ENCODE measurements at regions of chr19 and their contacts with region 1.

Region 1: DNA sequence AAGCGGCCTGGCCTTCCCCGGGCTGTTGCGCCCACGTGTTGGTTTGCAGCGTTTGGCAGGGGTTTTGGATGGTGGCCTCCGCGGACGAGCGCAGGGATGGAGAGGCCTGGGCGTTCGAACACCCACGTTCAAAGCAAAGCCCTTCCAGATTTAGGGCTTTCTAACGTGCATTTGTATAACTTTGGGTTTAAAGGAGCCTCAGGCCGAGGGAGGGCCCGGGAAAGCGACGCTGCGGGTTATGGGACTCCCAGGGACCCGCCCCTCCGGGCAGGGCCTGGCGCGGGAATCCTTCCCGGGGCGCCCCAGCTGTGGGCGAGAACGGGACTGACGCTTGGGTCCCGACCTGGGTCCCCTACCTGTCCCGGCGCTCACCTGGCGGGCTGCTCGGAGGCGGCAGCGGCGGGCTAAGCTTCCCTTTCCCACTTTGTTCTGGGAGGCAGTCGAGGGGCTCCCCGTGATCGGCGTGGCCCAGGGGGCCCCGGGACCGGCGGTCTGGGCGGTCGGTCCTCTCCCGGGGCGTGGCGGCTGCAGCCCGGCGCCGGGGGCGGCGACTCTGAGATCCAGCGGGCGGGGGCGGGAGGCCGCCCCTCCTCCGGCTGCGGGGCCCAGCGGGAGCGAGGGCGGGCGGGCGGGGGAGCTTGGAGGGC is at the start of gene FBXO17:
- DNase-seq: peak; percentile 68
- H3K4me3 ChIP-seq: peak within 1 kb of the TSS; percentile 65 to 91 (median 77)
- H3K27ac ChIP-seq: peak within 1 kb of the TSS; percentile 60
- H3K4me1 ChIP-seq: peaks cover 14% of the 10 kb centered on the region
- H3K27me3 ChIP-seq: no peaks in the 10 kb centered on the region
- CTCF ChIP-seq: no peak
- total RNA-seq, gene FBXO17: 18.6 to 25.8 TPM

Region 2: DNA sequence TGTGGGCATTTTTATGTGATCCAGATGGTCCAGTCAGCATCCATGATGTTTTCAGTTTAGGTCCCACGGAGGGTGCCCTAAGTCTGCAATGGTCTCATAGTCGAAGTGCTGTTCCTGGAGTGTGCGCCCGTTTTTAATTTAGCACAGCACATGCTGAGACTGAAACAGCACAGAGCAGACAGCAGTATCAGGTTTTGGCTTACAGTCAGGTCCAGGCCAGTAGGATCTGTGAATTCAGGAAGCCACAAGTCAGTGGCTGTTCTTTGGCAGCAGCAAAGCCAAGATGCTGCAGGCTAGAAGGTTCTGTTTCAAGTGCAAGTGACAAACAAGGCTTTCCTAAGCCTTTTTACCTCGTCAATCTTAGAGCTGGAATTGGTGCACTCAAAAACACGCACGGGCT is 38.7 kb after region 1 on chr19:
- CTCF ChIA-PET with region 1: no interaction called
- dilution Hi-C with region 1: no loop called
- in situ Hi-C with region 1: no loop called
- intact Hi-C with region 1: no loop called
- DNase-seq: no peak
- H3K4me3 ChIP-seq: no peak overlapping the region
- H3K27ac ChIP-seq: no peak overlapping the region
- H3K4me1 ChIP-seq: no peaks in the 10 kb centered on the region
- H3K27me3 ChIP-seq: no peaks in the 10 kb centered on the region
- CTCF ChIP-seq: no peak

Region 3: DNA sequence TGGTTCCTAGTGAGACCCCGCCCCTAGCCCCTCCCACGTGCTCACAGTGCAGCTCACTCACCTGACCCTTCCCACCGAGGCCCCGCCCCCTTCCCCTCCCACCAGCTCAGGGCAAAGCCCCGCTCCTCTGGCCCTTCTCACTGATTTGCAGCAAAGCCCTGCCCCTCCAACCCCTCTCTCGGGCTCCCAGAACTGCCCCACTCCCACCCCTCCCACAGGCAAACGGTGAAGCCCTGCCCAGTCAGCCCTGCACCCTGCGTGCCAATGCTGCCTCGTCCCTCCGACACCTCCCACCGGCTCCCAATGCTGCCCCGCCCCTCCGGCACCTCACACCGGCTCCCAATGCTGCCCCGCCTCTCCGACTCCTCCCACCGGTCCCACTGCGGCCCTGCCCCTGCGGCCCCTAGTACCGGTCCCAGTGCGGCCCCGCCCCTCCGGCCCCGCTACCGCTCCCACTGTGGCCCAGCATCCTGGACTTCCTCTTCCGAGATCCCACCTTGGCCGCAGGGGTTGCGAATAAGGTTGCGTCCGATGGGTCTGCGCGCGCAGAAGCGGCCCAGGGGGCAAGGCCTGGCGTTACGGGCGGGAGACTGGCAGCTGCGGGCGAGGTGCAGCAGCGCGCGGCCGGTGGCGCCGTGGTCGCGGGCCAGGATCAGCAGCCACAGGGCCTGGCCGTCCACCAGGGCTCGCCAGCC is 56.2 kb after region 1 on chr19:
- CTCF ChIA-PET with region 1: no interaction called
- dilution Hi-C with region 1: no loop called
- in situ Hi-C with region 1: loop called in 1 of 2 experiments (anchors 10 kb)
- intact Hi-C with region 1: loop called (anchors 1 kb)
- DNase-seq: peak; percentile 96
- H3K4me3 ChIP-seq: peak overlapping the region; percentile 77 to 90 (median 79)
- H3K27ac ChIP-seq: peak overlapping the region; percentile 36
- H3K4me1 ChIP-seq: peaks cover 23% of the 10 kb centered on the region
- H3K27me3 ChIP-seq: no peaks in the 10 kb centered on the region
- CTCF ChIP-seq: no peak

Region 4: GRCh38 chr19:39078436-39079200 is 103.3 kb after region 1 on chr19:
- CTCF ChIA-PET with region 1: interaction called, 28 read pairs
- dilution Hi-C with region 1: no loop called
- in situ Hi-C with region 1: no loop called
- intact Hi-C with region 1: no loop called
- DNase-seq: peak; percentile 98
- H3K4me3 ChIP-seq: no peak overlapping the region
- H3K27ac ChIP-seq: peak overlapping the region; percentile 87
- H3K4me1 ChIP-seq: peaks cover 40% of the 10 kb centered on the region
- H3K27me3 ChIP-seq: no peaks in the 10 kb centered on the region
- CTCF ChIP-seq: no peak

Region 5: GRCh38 chr19:39110263-39110967 is 135.1 kb after region 1 on chr19:
- CTCF ChIA-PET with region 1: no interaction called
- dilution Hi-C with region 1: no loop called
- in situ Hi-C with region 1: no loop called
- intact Hi-C with region 1: loop called (anchors 5 kb)
- DNase-seq: no peak
- H3K4me3 ChIP-seq: no peak overlapping the region
- H3K27ac ChIP-seq: no peak overlapping the region
- H3K4me1 ChIP-seq: peaks cover 15% of the 10 kb centered on the region
- H3K27me3 ChIP-seq: no peaks in the 10 kb centered on the region
- CTCF ChIP-seq: peak; percentile 70 to 85

Measured in mammary epithelial cell (primary cell).